ENCODE measurements at regions of chrX and their contacts with region 1.

Region 1: GRCh38 chrX:139967300-139967699 is 2.0 kb upstream of the CXorf66 start:
- DNase-seq: peak; percentile 50
- H3K4me3 ChIP-seq: no peak overlapping the region
- H3K27ac ChIP-seq: no peak overlapping the region
- H3K4me1 ChIP-seq: peaks cover 27% of the 10 kb centered on the region
- H3K27me3 ChIP-seq: no peaks in the 10 kb centered on the region
- CTCF ChIP-seq: peak; percentile 49; the same call in 1 of the 2 replicates

Region 2: DNA sequence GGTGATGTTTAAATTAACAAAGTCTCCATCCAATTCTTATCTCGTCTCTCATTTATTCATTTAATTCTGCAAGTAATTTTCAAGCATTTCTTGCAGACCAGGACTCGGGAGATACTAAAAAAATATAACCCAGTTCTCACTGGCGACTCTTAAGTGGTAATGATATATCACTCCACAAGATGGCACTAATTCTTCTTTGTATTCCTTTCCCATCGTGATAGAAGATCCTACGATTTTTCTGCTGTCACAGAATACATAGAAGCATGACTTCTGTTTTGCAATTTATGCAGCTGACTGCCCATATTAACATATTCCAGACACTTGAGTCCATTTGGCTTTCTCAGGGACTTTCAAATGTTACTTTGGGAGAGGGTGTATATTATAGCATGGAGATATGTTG is 1191.8 kb before region 1 on chrX:
- CTCF ChIA-PET with region 1: no interaction called
- POLR2A ChIA-PET with region 1: no interaction called
- intact Hi-C with region 1: loop called (anchors 1 kb)
- DNase-seq: peak; percentile 71
- H3K4me3 ChIP-seq: no peak overlapping the region
- H3K27ac ChIP-seq: no peak overlapping the region
- H3K4me1 ChIP-seq: peaks cover 22% of the 10 kb centered on the region
- H3K27me3 ChIP-seq: no peaks in the 10 kb centered on the region
- CTCF ChIP-seq: peak; percentile 60

Region 3: DNA sequence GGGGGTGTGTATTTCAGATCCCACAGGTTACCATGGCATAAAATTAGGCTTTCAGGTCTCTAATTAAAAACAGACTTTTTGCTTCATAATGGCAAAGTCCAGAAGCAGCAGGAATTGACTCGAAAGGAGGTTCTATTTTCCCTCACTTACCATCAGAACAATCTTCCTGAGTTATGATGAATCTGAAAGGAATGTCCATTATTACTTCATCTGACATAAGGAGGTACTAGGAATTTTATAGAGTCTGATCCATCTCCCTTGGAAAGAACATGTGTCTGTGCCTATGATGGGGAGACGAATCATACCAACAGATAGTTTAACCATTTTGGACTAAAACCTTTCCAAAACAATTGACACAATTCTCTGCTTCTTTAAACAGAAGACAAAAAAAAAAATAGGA is 1049.5 kb before region 1 on chrX:
- CTCF ChIA-PET with region 1: no interaction called
- POLR2A ChIA-PET with region 1: no interaction called
- intact Hi-C with region 1: loop called (anchors 2 kb)
- DNase-seq: peak; percentile 44
- H3K4me3 ChIP-seq: no peak overlapping the region
- H3K27ac ChIP-seq: no peak overlapping the region
- H3K4me1 ChIP-seq: peaks cover 18% of the 10 kb centered on the region
- H3K27me3 ChIP-seq: no peaks in the 10 kb centered on the region
- CTCF ChIP-seq: no peak

Region 4: DNA sequence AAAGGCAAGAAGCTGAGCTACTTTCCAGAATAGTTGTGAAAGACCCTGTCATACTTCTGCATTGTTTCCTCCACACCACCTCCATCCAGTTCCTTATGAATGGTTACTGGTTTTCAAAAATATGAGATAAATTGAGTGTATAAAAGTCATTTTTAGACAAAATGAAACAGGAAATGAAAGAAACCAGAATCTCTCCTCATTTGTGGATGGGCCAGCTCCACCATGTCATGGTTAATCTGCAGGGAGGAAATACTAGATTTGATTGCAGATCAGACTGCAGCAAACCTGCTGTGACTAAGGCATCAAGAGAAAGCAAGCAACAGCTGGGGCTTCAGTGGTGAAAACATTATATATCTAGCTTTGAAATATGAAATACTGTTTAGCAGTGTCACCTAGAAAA is 412.9 kb before region 1 on chrX:
- CTCF ChIA-PET with region 1: no interaction called
- POLR2A ChIA-PET with region 1: no interaction called
- intact Hi-C with region 1: loop called (anchors 5 kb)
- DNase-seq: peak; percentile 77
- H3K4me3 ChIP-seq: no peak overlapping the region
- H3K27ac ChIP-seq: peak overlapping the region; percentile 79
- H3K4me1 ChIP-seq: peaks cover 31% of the 10 kb centered on the region
- H3K27me3 ChIP-seq: no peaks in the 10 kb centered on the region
- CTCF ChIP-seq: no peak

Region 5: GRCh38 chrX:139759637-139760036 is 207.7 kb before region 1 on chrX:
- CTCF ChIA-PET with region 1: no interaction called
- POLR2A ChIA-PET with region 1: no interaction called
- intact Hi-C with region 1: loop called (anchors 1 kb)
- DNase-seq: peak; percentile 68
- H3K4me3 ChIP-seq: no peak overlapping the region
- H3K27ac ChIP-seq: peak overlapping the region; percentile 41
- H3K4me1 ChIP-seq: peaks cover 11% of the 10 kb centered on the region
- H3K27me3 ChIP-seq: no peaks in the 10 kb centered on the region
- CTCF ChIP-seq: peak; percentile 74